ENCODE measurements at regions of chr13 and their contacts with region 1.

Region 1: GRCh38 chr13:30551189-30551588 is 66.5 kb upstream of the USPL1 start:
- DNase-seq: no peak
- ATAC-seq: no peak
- H3K4me3 ChIP-seq: no peak overlapping the region
- H3K27ac ChIP-seq: no peak overlapping the region
- H3K4me1 ChIP-seq: no peaks in the 10 kb centered on the region
- H3K27me3 ChIP-seq: no peaks in the 10 kb centered on the region
- CTCF ChIP-seq: peak in 6 of 9 donors; percentile 11 to 46 (median 28)

Region 2: DNA sequence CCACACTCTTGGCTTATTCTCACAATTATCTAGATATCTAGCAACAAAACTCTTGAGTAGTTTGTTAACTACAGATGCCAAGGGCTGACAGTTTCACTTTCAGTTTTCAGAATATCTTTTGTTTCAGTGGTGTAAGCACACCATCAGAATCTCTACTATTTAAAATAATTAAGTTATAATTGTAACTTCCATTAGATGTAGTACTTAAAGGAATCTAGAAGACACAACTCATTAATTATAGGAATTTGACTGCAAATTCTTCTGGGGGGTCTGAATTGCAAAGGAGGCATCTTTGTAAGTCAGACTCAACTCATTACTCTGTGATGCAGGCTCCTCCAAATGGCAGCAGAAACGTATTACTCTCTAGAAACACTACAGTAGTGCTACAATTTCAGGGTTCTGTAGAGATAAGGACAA is 21.7 kb after region 1 on chr13:
- intact Hi-C with region 1: no loop called
- DNase-seq: peak in 1 of 2 donors; percentile 42
- ATAC-seq: peak in 6 of 8 donors; percentile 75 to 82 (median 77)
- H3K4me3 ChIP-seq: peak overlapping the region in 9 of 10 donors; percentile 25 to 51 (median 39)
- H3K27ac ChIP-seq: peak overlapping the region in 8 of 10 donors; percentile 38 to 80 (median 62)
- H3K4me1 ChIP-seq: peaks cover 0 to 57% (median 25%) of the 10 kb centered on the region in 9 donors
- H3K27me3 ChIP-seq: no peaks in the 10 kb centered on the region
- CTCF ChIP-seq: peak in 6 of 9 donors; percentile 16 to 59 (median 48)

Region 3: DNA sequence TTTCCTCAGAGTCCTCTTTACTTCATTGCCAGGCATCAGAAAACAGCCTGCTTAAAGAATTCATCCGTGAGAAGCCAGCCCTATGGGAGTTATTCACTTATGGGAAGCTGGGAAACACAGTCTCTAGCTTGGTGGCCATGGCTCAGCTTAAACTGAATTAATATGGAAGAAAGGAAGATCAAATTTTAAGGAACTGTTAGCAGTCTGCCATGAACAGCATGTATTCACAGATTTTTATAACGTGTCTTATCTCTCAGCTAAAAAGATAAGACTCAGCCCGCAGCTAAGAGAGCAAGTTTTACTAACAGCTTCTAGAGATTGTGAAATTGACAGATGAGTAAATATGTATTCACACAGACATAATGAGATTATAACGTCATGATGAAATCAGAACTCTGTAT is 934.5 kb after region 1 on chr13:
- intact Hi-C with region 1: loop called in 1 of 10 experiments (anchors 5 kb)
- DNase-seq: no peak
- ATAC-seq: peak in 1 of 8 donors; percentile 35
- H3K4me3 ChIP-seq: no peak overlapping the region
- H3K27ac ChIP-seq: peak overlapping the region in 1 of 10 donors; percentile 62
- H3K4me1 ChIP-seq: peaks cover 0 to 9% (median 0%) of the 10 kb centered on the region in 9 donors
- H3K27me3 ChIP-seq: no peaks in the 10 kb centered on the region
- CTCF ChIP-seq: no peak